ENCODE measurements at regions of chr13 and their contacts with region 1.

Region 1: DNA sequence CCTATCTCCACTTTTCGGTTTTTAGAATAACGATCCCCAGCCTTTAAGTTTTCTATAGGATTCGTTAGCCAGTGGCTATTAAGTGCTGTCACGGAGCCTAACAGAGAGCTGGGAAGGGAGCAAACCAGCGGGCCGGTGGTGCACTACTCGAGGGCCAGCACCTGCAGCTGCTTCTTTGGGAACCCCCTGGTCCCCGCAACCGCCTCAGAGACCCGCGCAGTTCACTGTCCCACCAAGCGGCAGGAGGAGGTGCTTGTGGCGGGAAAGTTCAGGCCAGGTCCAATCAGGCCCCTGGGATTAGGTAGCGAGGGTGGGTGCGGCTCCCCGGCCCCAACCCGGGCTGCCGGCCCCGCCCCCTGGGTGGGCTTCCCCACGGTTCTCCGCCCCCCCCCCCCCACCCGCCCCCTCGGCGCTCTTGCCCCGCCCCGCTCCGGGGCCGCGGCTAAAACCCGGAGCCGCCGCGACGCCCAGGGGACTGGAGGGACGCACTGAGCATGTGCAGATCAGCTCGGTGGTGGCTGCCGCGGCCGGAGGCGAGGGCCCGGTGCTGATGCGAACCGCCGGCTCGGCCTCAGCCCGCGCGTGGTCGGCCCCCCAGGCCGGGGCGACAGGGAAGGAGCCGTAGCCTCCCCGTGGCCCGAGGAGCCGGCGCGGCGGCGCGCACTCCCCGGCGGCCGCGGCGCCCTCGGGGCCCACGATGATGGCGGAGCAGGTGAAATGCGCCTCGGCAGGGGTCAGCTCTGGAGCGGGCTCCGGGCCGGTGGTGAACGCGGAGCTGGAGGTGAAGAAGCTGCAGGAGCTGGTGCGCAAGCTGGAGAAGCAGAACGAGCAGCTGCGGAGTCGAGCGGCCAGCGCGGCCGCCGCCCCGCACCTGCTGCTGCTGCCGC is at the start of gene SLAIN1:
- DNase-seq: peak; percentile 80
- ATAC-seq: peak; percentile 87
- H3K4me3 Mint-ChIP-seq: peak within 1 kb of the TSS; percentile 98
- H3K27ac Mint-ChIP-seq: peak within 1 kb of the TSS; percentile 85
- H3K4me1 Mint-ChIP-seq: peaks cover 29% of the 10 kb centered on the region
- H3K27me3 Mint-ChIP-seq: no peaks in the 10 kb centered on the region
- CTCF ChIP-seq: no peak
- total RNA-seq, gene SLAIN1: 15.3 and 16.2 TPM in 2 replicates

Region 2: GRCh38 chr13:77026818-77027585 is 670.5 kb before region 1 on chr13 and contains the start of gene FBXL3:
- CTCF ChIA-PET with region 1: no interaction called
- POLR2A ChIA-PET with region 1: interaction called, 3 read pairs
- intact Hi-C with region 1: loop called (anchors 1 kb)
- DNase-seq: peak; percentile 73
- ATAC-seq: peak; percentile 59
- H3K4me3 Mint-ChIP-seq: peak within 1 kb of the TSS; percentile 98
- H3K27ac Mint-ChIP-seq: peak within 1 kb of the TSS; percentile 96
- H3K4me1 Mint-ChIP-seq: peaks cover 54% of the 10 kb centered on the region
- H3K27me3 Mint-ChIP-seq: no peaks in the 10 kb centered on the region
- CTCF ChIP-seq: no peak
- total RNA-seq, gene FBXL3: 46.2 and 49.8 TPM in 2 replicates

Region 3: DNA sequence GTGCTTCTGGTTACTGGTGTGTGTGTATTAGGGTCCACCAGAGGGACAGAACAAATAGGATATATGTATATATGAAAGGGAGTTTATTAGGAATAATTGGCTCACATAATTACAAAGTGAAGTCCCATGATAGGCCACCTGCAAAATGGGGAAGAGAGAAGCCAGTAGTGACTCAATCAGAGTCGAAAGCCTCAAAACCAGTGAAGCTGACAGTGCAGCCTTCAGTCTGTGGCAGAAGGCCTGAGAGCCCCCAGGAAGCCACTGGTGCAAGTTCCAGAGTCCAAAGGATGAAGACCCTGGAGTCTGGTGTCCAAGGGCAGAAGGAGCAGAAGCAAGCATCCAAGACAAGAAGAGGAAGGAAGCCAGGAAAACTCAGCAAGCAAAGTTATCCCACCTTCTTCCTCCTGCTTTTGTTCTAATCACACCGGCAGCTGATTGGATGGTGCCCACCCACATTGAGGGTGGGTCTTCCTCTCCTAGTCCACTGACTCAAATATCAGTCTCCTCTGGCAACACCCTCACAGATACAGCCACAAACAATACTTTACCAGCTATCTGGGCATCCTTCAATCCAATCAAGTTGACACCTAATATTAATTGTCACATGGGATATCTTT is 183.6 kb before region 1 on chr13:
- CTCF ChIA-PET with region 1: no interaction called
- POLR2A ChIA-PET with region 1: no interaction called
- intact Hi-C with region 1: loop called (anchors 5 kb)
- DNase-seq: no peak
- ATAC-seq: peak; percentile 93
- H3K4me3 Mint-ChIP-seq: peak overlapping the region; percentile 63
- H3K27ac Mint-ChIP-seq: peak overlapping the region; percentile 80
- H3K4me1 Mint-ChIP-seq: peaks cover 41% of the 10 kb centered on the region
- H3K27me3 Mint-ChIP-seq: no peaks in the 10 kb centered on the region
- CTCF ChIP-seq: no peak

Region 4: GRCh38 chr13:77611068-77611467 is 86.4 kb before region 1 on chr13:
- CTCF ChIA-PET with region 1: no interaction called
- POLR2A ChIA-PET with region 1: no interaction called
- intact Hi-C with region 1: no loop called
- DNase-seq: no peak
- ATAC-seq: no peak
- H3K4me3 Mint-ChIP-seq: no peak overlapping the region
- H3K27ac Mint-ChIP-seq: no peak overlapping the region
- H3K4me1 Mint-ChIP-seq: no peaks in the 10 kb centered on the region
- H3K27me3 Mint-ChIP-seq: peaks cover 3% of the 10 kb centered on the region
- CTCF ChIP-seq: no peak

Region 5: GRCh38 chr13:78022164-78022877 is 324.9 kb after region 1 on chr13:
- CTCF ChIA-PET with region 1: no interaction called
- POLR2A ChIA-PET with region 1: no interaction called
- intact Hi-C with region 1: loop called (anchors 1 kb)
- DNase-seq: peak; percentile 20
- ATAC-seq: peak; percentile 99
- H3K4me3 Mint-ChIP-seq: no peak overlapping the region
- H3K27ac Mint-ChIP-seq: peak overlapping the region; percentile 19
- H3K4me1 Mint-ChIP-seq: peaks cover 19% of the 10 kb centered on the region
- H3K27me3 Mint-ChIP-seq: peaks cover 4% of the 10 kb centered on the region
- CTCF ChIP-seq: no peak

Region 6: DNA sequence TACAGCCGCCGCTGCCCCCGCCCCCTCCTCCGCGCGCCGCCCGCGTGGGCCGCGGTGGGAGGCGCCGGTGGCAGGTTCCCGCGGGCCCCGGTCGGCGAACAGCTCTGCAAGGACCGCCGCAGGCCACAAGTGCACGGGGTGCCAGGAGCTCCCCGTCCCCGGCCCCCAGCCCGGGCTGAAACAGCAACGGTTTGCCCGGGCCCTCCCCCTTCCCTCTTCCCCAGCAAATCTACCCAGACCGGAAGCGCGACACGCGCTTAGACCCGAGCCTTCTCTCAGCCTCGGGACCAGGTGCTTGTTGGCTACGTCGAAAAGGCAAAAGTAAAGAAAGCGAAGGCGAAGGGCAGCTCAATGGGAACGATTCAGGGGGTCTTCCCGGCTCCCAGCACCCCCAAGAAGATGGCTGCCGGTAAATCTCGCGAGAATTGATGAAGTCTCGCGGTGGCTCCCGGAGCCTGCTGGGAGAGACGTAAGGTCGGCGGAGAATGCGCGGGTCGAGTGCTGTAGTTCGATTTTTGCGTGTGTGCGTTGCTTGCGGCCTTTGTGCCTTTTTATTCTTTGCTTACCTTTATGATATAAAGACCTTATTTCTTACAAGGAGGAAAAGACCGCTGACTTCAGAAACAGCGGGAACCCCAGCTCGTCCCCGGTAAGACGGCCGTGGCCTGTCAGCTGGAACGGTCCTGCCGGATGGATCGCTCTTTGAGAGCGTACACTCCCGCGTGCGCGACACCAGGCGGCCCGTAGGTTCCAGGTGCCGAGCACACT is 1708.6 kb after region 1 on chr13 and contains the start of gene RBM26:
- CTCF ChIA-PET with region 1: no interaction called
- POLR2A ChIA-PET with region 1: no interaction called
- intact Hi-C with region 1: loop called (anchors 5 kb)
- DNase-seq: peak; percentile 84
- ATAC-seq: peak; percentile 88
- H3K4me3 Mint-ChIP-seq: no peak within 1 kb of the TSS
- H3K27ac Mint-ChIP-seq: peak within 1 kb of the TSS; percentile 97
- H3K4me1 Mint-ChIP-seq: peaks cover 15% of the 10 kb centered on the region
- H3K27me3 Mint-ChIP-seq: no peaks in the 10 kb centered on the region
- CTCF ChIP-seq: no peak
- total RNA-seq, gene RBM26: 73.5 and 92.9 TPM in 2 replicates